PC-3 (cell line): ENCODE measurements at regions of chr6 and their contacts with region 1.

Region 1: GRCh38 chr6:155561257-155561965 is 105.8 kb upstream of the NOX3 start:
- DNase-seq: peak; percentile 52
- ATAC-seq: peak; percentile 81
- H3K4me3 ChIP-seq: no peak overlapping the region
- H3K27ac ChIP-seq: no peak overlapping the region
- H3K4me1 ChIP-seq: peaks cover 4% of the 10 kb centered on the region
- H3K27me3 ChIP-seq: no peaks in the 10 kb centered on the region
- CTCF ChIP-seq: no peak

Region 2: GRCh38 chr6:155611742-155612141 is 50.3 kb after region 1 on chr6:
- CTCF ChIA-PET with region 1: no interaction called
- POLR2A ChIA-PET with region 1: no interaction called
- intact Hi-C with region 1: no loop called
- DNase-seq: no peak
- ATAC-seq: no peak
- H3K4me3 ChIP-seq: no peak overlapping the region
- H3K27ac ChIP-seq: no peak overlapping the region
- H3K4me1 ChIP-seq: no peaks in the 10 kb centered on the region
- H3K27me3 ChIP-seq: no peaks in the 10 kb centered on the region
- CTCF ChIP-seq: no peak

Region 3: DNA sequence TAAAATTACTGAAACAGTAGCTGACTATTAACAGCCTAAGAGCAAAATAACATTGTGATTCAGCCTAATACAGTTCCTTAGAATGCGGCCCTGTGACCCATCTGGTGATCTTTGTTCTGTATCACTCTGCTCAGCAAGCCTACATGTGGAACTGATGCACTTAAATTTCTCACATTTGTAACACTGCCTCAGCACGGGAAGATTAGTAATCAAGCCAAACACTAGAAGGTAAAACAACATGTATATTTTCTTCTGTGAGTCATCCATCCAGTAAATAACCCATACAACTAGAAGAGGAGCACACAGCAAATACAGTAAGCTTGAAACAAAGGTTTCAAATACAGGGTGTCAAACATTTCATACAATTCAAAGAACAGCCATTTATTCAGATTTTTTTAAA is 83.9 kb after region 1 on chr6:
- CTCF ChIA-PET with region 1: no interaction called
- POLR2A ChIA-PET with region 1: no interaction called
- intact Hi-C with region 1: loop called (anchors 1 kb)
- DNase-seq: peak; percentile 58
- ATAC-seq: peak; percentile 92
- H3K4me3 ChIP-seq: no peak overlapping the region
- H3K27ac ChIP-seq: no peak overlapping the region
- H3K4me1 ChIP-seq: peaks cover 8% of the 10 kb centered on the region; the same call in 1 of the 2 replicates
- H3K27me3 ChIP-seq: no peaks in the 10 kb centered on the region
- CTCF ChIP-seq: no peak